H1 (cell line): ENCODE measurements at regions of chr6 and their contacts with region 1.

Region 1: GRCh38 chr6:33654831-33655554 is 33.9 kb downstream of the ITPR3 start:
- DNase-seq: no peak
- H3K4me3 ChIP-seq: no peak overlapping the region
- H3K27ac ChIP-seq: no peak overlapping the region
- H3K4me1 ChIP-seq: peaks cover 0 to 16% (median 7%) of the 10 kb centered on the region in 4 experiments; a peak in 4 of 7 replicates
- H3K27me3 ChIP-seq: no peaks in the 10 kb centered on the region
- CTCF ChIP-seq: no peak
- EP300 ChIP-seq: no peak
- POLR2A ChIP-seq: no peak
- RAD21 ChIP-seq: no peak

Region 2: GRCh38 chr6:33672808-33673207 is 17.8 kb after region 1 on chr6:
- CTCF ChIA-PET with region 1: interaction called, 102 read pairs
- POLR2A ChIA-PET with region 1: interaction called, 3 read pairs
- DNase-seq: no peak
- H3K4me3 ChIP-seq: no peak overlapping the region
- H3K27ac ChIP-seq: no peak overlapping the region
- H3K4me1 ChIP-seq: peaks cover 0 to 3% (median 1%) of the 10 kb centered on the region in 4 experiments; a peak in 1 of 7 replicates
- H3K27me3 ChIP-seq: no peaks in the 10 kb centered on the region
- CTCF ChIP-seq: peak in 2 of 3 experiments; percentile 45 to 73; a peak in 3 of 4 replicates
- EP300 ChIP-seq: no peak
- POLR2A ChIP-seq: no peak
- RAD21 ChIP-seq: peak; percentile 48 to 56